ENCODE measurements at regions of chrX and their contacts with region 1.

Region 1: GRCh38 chrX:70196961-70197805 is 19.9 kb downstream of the DGAT2L6 start:
- DNase-seq: peak; percentile 81
- H3K4me3 Mint-ChIP-seq: no peak overlapping the region
- H3K27ac Mint-ChIP-seq: no peak overlapping the region
- H3K4me1 Mint-ChIP-seq: peaks cover 2% of the 10 kb centered on the region
- H3K27me3 Mint-ChIP-seq: no peaks in the 10 kb centered on the region

Region 2: GRCh38 chrX:70128071-70128470 is 69.1 kb before region 1 on chrX:
- CTCF ChIA-PET with region 1: no interaction called
- intact Hi-C with region 1: no loop called
- DNase-seq: no peak
- H3K4me3 Mint-ChIP-seq: no peak overlapping the region
- H3K27ac Mint-ChIP-seq: no peak overlapping the region
- H3K4me1 Mint-ChIP-seq: peaks cover 8% of the 10 kb centered on the region
- H3K27me3 Mint-ChIP-seq: no peaks in the 10 kb centered on the region

Region 3: DNA sequence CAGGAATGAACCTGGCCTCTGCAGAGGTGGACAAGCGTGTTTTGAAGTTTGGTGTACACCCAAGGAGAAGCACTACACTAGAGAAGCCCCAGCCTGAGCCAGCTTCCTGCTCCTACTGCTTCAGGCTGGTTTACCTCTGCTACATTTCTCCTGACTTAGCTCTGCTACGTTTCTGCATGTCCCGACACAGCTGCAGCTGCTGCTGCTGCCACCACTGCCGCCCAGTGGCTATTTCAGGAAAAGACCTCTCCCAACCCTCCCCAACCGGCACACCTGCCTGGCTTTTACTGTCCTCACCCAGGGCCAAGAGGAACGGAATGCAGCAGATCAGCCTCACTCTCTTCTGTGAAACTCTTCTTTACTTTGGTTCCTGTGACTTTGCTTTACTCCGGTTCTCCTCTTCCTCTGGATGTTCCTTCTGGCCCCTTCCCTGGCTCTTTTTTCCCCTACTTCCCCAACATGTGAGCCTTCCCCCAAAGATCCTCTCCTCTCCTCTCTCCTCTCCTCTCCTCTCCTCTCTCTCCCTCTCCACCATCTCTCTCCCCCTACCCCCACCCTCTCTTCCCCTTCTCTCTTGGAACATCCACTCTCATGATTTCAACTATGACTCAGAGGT is 65.9 kb after region 1 on chrX:
- CTCF ChIA-PET with region 1: interaction called, 4 read pairs
- intact Hi-C with region 1: loop called (anchors 1 kb)
- DNase-seq: peak; percentile 59
- H3K4me3 Mint-ChIP-seq: no peak overlapping the region
- H3K27ac Mint-ChIP-seq: no peak overlapping the region
- H3K4me1 Mint-ChIP-seq: no peaks in the 10 kb centered on the region
- H3K27me3 Mint-ChIP-seq: no peaks in the 10 kb centered on the region

Region 4: DNA sequence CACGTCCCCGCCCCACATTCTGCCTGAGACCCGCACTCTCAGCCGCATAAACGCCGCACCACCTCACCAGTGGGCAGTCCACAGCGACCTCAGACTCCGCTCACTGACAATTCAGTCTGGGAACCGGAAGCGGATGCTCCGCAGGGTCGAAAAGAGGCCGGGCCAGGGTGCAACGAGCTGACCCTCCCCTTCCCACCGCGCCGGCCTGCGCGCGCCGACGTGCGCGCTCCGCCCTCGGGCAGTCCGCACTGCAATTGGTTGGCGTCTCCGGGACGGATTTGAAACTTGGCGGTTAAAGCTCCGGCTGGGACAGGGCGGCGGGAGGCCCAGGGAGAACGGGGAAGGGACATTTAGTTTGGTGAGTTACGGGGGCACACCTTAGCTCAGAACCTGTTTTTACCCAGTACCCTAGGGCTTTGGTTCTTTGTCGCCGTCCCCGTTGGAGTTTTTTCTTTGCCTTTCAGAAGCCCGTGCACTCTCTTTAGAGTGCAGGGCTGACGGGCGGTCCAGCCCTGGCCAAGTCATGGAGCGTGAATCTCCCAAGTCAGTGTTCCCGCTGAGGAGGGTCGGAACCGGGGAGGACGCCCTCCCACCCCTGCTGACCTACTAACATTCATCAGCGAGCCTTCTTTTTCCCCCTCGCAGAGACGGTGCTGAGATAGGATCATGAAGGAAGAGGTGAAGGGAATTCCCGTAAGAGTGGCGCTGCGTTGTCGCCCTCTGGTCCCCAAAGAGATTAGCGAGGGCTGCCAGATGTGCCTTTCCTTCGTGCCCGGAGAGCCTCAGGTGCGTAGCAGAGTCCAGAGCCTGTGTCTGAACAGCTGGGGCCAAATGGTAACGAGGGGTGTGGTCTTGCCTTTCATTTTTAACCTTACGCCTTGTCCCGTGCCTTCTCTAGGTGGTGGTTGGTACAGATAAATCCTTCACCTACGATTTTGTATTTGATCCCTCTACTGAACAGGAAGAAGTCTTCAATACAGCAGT is 92.9 kb after region 1 on chrX and contains the starts of genes KIF4A and PDZD11:
- CTCF ChIA-PET with region 1: no interaction called
- intact Hi-C with region 1: loop called (anchors 1 kb)
- DNase-seq: peak; percentile 86
- H3K4me3 Mint-ChIP-seq: peak within 1 kb of the TSS; percentile 90
- H3K27ac Mint-ChIP-seq: peak within 1 kb of the TSS; percentile 83
- H3K4me1 Mint-ChIP-seq: peaks cover 5% of the 10 kb centered on the region
- H3K27me3 Mint-ChIP-seq: no peaks in the 10 kb centered on the region
- total RNA-seq, gene KIF4A: 27.1 to 29.6 TPM
- total RNA-seq, gene PDZD11: 24.5 to 25.9 TPM

Region 5: GRCh38 chrX:70324326-70324725 is 127.1 kb after region 1 on chrX:
- CTCF ChIA-PET with region 1: no interaction called
- intact Hi-C with region 1: no loop called
- DNase-seq: no peak
- H3K4me3 Mint-ChIP-seq: no peak overlapping the region
- H3K27ac Mint-ChIP-seq: no peak overlapping the region
- H3K4me1 Mint-ChIP-seq: no peaks in the 10 kb centered on the region
- H3K27me3 Mint-ChIP-seq: no peaks in the 10 kb centered on the region

Region 6: DNA sequence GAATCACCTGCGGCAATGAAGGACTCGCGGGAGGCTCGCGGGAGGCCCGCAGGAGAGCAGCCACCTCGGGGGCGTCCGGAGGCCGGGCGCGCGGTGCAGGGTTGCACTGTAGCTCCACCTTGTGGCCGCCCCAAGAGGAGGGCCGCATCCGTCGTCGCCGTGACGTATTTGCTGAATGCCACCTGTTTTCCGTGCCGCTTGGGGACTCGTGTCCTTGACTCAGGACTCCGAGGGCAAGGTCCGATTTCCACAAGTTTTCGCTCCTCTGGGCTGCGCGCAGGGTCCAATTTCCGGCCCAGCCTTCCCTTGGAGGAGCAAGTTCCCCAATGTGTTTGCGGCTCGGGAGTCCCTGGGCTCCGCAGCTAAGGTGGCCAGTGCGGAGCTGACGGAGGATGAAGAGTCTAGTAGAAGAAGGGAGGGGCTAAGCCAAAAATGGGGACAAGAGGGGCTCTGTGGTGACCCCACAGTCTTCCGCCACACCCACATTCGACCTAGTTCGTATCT is 236.7 kb after region 1 on chrX:
- CTCF ChIA-PET with region 1: interaction called, 6 read pairs
- intact Hi-C with region 1: loop called (anchors 1 kb)
- DNase-seq: peak; percentile 80
- H3K4me3 Mint-ChIP-seq: peak overlapping the region; percentile 84
- H3K27ac Mint-ChIP-seq: peak overlapping the region; percentile 50
- H3K4me1 Mint-ChIP-seq: peaks cover 7% of the 10 kb centered on the region
- H3K27me3 Mint-ChIP-seq: peaks cover 11% of the 10 kb centered on the region

Region 7: DNA sequence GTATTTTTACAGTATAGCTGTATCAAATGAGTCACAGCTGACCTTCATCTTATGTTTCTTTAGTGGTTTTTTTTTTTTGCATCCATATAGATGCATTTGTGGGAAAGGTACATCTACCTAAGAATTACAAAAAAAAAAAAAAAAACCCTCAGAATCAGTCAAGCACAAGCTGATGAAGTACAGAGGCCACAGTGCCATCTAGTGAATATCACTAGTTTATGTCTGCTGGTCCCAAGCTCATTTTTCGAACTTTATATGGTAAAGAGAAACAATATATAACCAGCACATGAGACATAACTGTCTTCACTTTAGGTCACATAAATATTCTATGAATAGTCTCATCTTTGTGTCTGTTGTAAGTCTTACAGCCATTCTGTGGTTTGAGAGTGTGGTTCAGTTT is 467.5 kb after region 1 on chrX:
- CTCF ChIA-PET with region 1: no interaction called
- intact Hi-C with region 1: loop called (anchors 5 kb)
- DNase-seq: peak; percentile 6
- H3K4me3 Mint-ChIP-seq: no peak overlapping the region
- H3K27ac Mint-ChIP-seq: no peak overlapping the region
- H3K4me1 Mint-ChIP-seq: no peaks in the 10 kb centered on the region
- H3K27me3 Mint-ChIP-seq: no peaks in the 10 kb centered on the region